ENCODE measurements at regions of chr6 and their contacts with region 1.

Region 1: GRCh38 chr6:4135665-4136353 is 434 bp upstream of the ECI2 start:
- DNase-seq: peak; percentile 90 to 92
- H3K4me3 ChIP-seq: peak overlapping the region; percentile 67
- H3K4me3 Mint-ChIP-seq: peak overlapping the region; percentile 72
- H3K27ac Mint-ChIP-seq: no peak overlapping the region
- H3K4me1 ChIP-seq: peaks cover 13% of the 10 kb centered on the region
- H3K4me1 Mint-ChIP-seq: peaks cover 18% of the 10 kb centered on the region
- H3K27me3 ChIP-seq: no peaks in the 10 kb centered on the region
- H3K27me3 Mint-ChIP-seq: peaks cover 3% of the 10 kb centered on the region
- CTCF ChIP-seq: no peak

Region 2: DNA sequence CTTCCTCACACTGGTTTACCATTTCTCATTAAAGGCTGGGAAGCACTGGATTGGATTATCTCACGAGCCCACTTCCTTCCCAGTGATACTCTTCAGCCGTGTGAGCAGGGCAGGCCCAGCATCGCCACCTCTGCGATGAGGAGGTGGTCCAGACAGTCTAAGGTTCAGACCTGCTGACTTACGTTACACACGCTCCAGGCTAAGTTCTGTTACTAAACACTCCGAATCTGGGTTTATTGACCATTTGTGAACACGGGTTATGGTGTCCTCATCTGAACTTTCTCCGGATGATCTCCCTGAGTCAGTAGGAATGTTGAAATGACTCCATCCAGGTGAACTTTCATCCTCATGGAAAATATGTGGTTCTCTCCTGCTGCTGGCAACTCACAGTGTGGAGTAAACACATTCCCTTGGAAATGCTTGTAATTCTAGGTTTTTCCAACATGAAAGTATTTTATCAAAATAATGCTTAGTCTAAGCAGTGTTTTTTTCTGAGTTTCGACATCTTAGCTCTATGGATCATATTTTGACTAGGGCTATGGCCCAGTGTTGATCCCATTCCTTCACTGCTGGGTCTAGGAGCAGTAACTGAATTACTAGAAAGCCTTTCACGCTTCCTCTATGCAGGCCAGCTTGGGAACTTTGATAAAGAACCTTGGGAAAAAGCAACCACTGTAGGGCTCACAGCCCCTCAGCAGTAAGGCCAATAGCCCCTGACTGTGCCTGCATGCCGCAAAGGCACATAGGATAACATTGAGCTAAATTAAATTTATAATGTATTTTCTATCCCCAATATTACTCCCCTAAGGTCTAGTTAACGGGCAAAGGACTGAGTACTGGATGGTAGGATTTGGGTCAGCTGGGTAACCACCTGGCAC is 346.6 kb before region 1 on chr6:
- CTCF ChIA-PET with region 1: no interaction called
- POLR2A ChIA-PET with region 1: interaction called, 10 read pairs
- intact Hi-C with region 1: no loop called
- DNase-seq: peak; percentile 60 to 64
- H3K4me3 ChIP-seq: no peak overlapping the region
- H3K4me3 Mint-ChIP-seq: peak overlapping the region; percentile 10
- H3K27ac Mint-ChIP-seq: peak overlapping the region; percentile 88
- H3K4me1 ChIP-seq: peaks cover 31% of the 10 kb centered on the region
- H3K4me1 Mint-ChIP-seq: peaks cover 7% of the 10 kb centered on the region
- H3K27me3 ChIP-seq: no peaks in the 10 kb centered on the region
- H3K27me3 Mint-ChIP-seq: no peaks in the 10 kb centered on the region
- CTCF ChIP-seq: no peak

Region 3: DNA sequence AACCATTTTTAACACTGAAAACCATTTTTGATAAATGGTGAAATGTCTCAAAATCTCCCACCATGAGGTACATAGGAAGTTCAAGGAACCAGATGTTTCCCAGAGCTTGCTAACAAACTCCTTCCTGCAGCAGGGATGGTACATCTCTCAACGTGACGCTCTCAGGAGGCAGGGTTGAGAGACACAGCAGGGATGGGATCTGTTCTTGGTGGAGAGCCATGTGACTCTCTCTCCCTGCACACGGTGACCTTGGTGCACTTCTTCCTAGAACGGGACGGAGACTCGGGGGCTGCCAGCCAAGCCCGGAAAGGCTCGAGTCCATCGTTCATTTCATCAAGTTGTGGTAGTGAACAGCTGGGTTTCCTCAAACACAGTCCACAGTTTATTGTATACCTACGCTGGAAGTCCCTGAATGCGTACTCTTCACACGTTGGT is 192.5 kb before region 1 on chr6:
- CTCF ChIA-PET with region 1: no interaction called
- POLR2A ChIA-PET with region 1: no interaction called
- intact Hi-C with region 1: no loop called
- DNase-seq: no peak
- H3K4me3 ChIP-seq: no peak overlapping the region
- H3K4me3 Mint-ChIP-seq: no peak overlapping the region
- H3K27ac Mint-ChIP-seq: no peak overlapping the region
- H3K4me1 ChIP-seq: no peaks in the 10 kb centered on the region
- H3K4me1 Mint-ChIP-seq: no peaks in the 10 kb centered on the region
- H3K27me3 ChIP-seq: no peaks in the 10 kb centered on the region
- H3K27me3 Mint-ChIP-seq: peaks cover 5% of the 10 kb centered on the region
- CTCF ChIP-seq: no peak

Region 4: GRCh38 chr6:4021133-4021853 is 114.5 kb before region 1 on chr6:
- CTCF ChIA-PET with region 1: interaction called, 8 read pairs
- POLR2A ChIA-PET with region 1: interaction called, 10 read pairs
- intact Hi-C with region 1: no loop called
- DNase-seq: peak; percentile 95 to 96
- H3K4me3 ChIP-seq: peak overlapping the region; percentile 89
- H3K4me3 Mint-ChIP-seq: peak overlapping the region; percentile 98
- H3K27ac Mint-ChIP-seq: peak overlapping the region; percentile 99
- H3K4me1 ChIP-seq: peaks cover 17% of the 10 kb centered on the region
- H3K4me1 Mint-ChIP-seq: peaks cover 7% of the 10 kb centered on the region
- H3K27me3 ChIP-seq: no peaks in the 10 kb centered on the region
- H3K27me3 Mint-ChIP-seq: no peaks in the 10 kb centered on the region
- CTCF ChIP-seq: peak in 1 of 2 experiments; percentile 29

Region 5: DNA sequence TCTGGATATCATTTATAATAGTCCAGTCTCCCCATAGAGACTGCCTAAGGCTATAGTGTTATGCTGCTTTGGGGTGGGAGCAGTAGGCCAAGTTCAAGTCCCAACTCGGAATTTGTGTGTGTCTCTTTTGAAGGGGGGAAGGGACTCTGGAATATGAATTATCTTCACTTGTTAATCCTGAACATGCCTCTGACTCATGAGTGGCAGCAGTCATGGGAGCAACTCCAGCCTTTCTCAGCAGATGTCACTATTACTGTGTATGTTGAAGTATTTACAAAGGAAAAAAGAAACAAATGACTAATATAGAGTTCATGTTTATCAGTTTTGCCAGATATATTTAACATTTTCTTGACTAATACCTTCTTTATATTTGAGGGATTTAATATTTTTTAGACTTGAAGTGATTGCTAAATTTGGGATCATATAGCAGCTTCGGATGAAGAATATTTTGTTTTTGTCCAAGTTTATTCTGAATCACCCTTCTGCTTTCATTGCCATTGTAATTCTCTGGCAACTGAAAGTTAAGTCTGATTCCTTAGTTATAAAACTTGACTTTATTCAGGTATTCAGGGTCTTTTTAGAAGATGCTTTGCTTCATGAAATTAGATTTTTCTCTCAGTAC is 80.3 kb before region 1 on chr6:
- CTCF ChIA-PET with region 1: no interaction called
- POLR2A ChIA-PET with region 1: no interaction called
- intact Hi-C with region 1: loop called (anchors 1 kb)
- DNase-seq: peak in 1 of 2 experiments; percentile 50
- H3K4me3 ChIP-seq: no peak overlapping the region
- H3K4me3 Mint-ChIP-seq: no peak overlapping the region
- H3K27ac Mint-ChIP-seq: no peak overlapping the region
- H3K4me1 ChIP-seq: no peaks in the 10 kb centered on the region
- H3K4me1 Mint-ChIP-seq: no peaks in the 10 kb centered on the region
- H3K27me3 ChIP-seq: no peaks in the 10 kb centered on the region
- H3K27me3 Mint-ChIP-seq: no peaks in the 10 kb centered on the region
- CTCF ChIP-seq: peak in 1 of 2 experiments; percentile 61

Region 6: GRCh38 chr6:4074478-4075235 is 61.2 kb before region 1 on chr6:
- CTCF ChIA-PET with region 1: no interaction called
- POLR2A ChIA-PET with region 1: no interaction called
- intact Hi-C with region 1: loop called (anchors 1 kb)
- DNase-seq: peak; percentile 24 to 46
- H3K4me3 ChIP-seq: no peak overlapping the region
- H3K4me3 Mint-ChIP-seq: no peak overlapping the region
- H3K27ac Mint-ChIP-seq: no peak overlapping the region
- H3K4me1 ChIP-seq: no peaks in the 10 kb centered on the region
- H3K4me1 Mint-ChIP-seq: peaks cover 6% of the 10 kb centered on the region
- H3K27me3 ChIP-seq: no peaks in the 10 kb centered on the region
- H3K27me3 Mint-ChIP-seq: no peaks in the 10 kb centered on the region
- CTCF ChIP-seq: no peak

Region 7: DNA sequence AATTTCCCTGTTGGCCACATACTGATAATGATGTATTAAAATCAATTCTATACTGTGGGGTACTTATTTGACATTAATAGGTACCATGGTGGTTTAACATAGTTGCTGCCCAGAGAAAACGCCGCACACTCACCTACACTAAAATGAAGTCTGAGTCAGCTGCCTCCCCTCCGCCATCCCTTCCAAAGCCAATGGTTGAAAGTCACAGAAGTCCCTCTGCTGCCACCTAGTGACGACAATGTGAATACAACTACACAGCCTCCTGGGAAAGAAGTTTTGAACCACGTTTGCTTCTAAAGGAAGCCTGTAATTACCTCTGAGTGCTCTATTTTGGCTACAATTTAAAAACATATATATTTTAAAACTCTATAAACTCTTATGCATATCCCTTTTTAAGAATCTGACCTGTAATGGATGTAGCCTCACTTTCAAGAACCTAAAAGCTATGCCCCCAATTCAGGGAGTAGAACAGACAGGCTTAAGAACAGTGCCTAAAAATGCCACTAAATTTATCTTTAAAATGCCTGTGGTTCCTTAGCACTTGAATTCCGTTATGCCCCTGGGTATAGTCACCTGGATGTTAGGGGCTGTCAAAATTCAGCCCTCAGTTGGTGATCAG is 20.1 kb after region 1 on chr6:
- CTCF ChIA-PET with region 1: interaction called, 6 read pairs
- POLR2A ChIA-PET with region 1: interaction called, 10 read pairs
- intact Hi-C with region 1: no loop called
- DNase-seq: peak; percentile 77 to 79
- H3K4me3 ChIP-seq: no peak overlapping the region
- H3K4me3 Mint-ChIP-seq: no peak overlapping the region
- H3K27ac Mint-ChIP-seq: no peak overlapping the region
- H3K4me1 ChIP-seq: no peaks in the 10 kb centered on the region
- H3K4me1 Mint-ChIP-seq: no peaks in the 10 kb centered on the region
- H3K27me3 ChIP-seq: no peaks in the 10 kb centered on the region
- H3K27me3 Mint-ChIP-seq: peaks cover 12% of the 10 kb centered on the region
- CTCF ChIP-seq: peak; percentile 83 to 84

Region 8: DNA sequence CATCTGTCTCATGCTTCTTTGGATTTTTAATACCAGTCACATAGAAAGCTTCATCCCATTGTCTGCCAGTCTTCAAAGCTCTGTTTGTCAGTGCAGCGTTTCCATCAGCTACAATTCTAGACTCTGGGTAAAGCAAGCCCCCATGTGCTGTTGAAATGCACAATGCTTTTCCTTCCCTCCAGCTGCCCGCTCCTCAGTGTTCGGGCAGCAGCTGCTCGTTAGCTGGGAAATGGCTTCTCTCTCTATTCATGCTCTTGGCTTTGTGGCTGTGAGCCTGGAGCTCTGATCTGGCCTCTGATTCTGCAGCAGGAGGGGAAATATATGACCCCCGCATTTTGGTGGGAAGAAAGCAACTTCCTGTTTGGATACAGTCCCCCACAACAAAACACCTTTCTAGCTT is 427.3 kb after region 1 on chr6:
- CTCF ChIA-PET with region 1: no interaction called
- POLR2A ChIA-PET with region 1: no interaction called
- intact Hi-C with region 1: no loop called
- DNase-seq: no peak
- H3K4me3 ChIP-seq: no peak overlapping the region
- H3K4me3 Mint-ChIP-seq: no peak overlapping the region
- H3K27ac Mint-ChIP-seq: no peak overlapping the region
- H3K4me1 ChIP-seq: no peaks in the 10 kb centered on the region
- H3K4me1 Mint-ChIP-seq: no peaks in the 10 kb centered on the region
- H3K27me3 ChIP-seq: no peaks in the 10 kb centered on the region
- H3K27me3 Mint-ChIP-seq: peaks cover 7% of the 10 kb centered on the region
- CTCF ChIP-seq: no peak

Measured in Caco-2 (cell line).